ENCODE measurements at regions of chr1 and their contacts with region 1.

Region 1: DNA sequence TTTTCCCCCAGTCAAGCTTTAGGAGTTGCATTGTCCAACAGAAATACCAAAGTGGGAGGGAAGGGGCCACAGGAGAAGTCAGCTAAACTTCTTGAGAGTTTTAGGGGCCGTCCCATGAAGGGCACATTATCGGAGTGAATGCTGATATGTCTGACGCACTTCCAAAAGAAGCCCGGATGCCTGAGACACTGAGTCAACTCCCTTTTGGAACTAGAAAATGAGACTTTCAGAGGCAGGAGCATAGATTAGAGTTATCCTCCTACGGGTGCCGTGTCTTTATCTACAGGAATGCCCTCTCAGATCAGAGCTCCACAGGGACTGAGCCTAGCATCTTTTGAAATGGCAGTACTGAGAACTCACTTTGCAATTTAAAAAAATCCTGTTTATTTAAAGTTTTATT is 13.1 kb downstream of the ACTN2 start:
- DNase-seq: no peak
- H3K4me3 Mint-ChIP-seq: no peak overlapping the region
- H3K27ac Mint-ChIP-seq: no peak overlapping the region
- H3K4me1 Mint-ChIP-seq: no peaks in the 10 kb centered on the region
- H3K27me3 Mint-ChIP-seq: peaks cover 14% of the 10 kb centered on the region

Region 2: GRCh38 chr1:236685917-236686814 is 13.2 kb before region 1 on chr1 and contains the start of gene ACTN2:
- CTCF ChIA-PET with region 1: interaction called, 4 read pairs
- POLR2A ChIA-PET with region 1: interaction called, 15 read pairs
- DNase-seq: peak; percentile 40
- H3K4me3 Mint-ChIP-seq: peak within 1 kb of the TSS; percentile 46
- H3K27ac Mint-ChIP-seq: no peak within 1 kb of the TSS
- H3K4me1 Mint-ChIP-seq: peaks cover 14% of the 10 kb centered on the region
- H3K27me3 Mint-ChIP-seq: peaks cover 46% of the 10 kb centered on the region
- total RNA-seq, gene ACTN2: not detected

Region 3: DNA sequence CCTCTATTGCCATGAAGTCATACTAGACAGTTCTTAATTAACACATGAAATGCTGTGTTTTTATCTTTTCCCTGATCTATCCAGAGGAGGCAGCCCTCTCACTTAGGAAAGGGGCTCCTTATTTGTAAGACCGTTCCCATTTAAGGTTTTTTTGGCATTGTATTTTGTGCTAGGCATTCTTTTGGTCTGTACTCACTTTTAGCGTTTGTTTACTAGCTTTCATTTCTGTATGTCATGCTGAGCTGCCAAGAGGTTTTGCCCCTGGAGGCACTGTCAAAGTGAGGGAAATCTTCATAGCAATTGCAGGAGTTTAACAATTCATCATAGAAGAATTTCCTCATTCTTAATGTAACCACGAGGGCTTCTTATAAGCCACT is 155.2 kb after region 1 on chr1:
- CTCF ChIA-PET with region 1: no interaction called
- POLR2A ChIA-PET with region 1: no interaction called
- DNase-seq: no peak
- H3K4me3 Mint-ChIP-seq: no peak overlapping the region
- H3K27ac Mint-ChIP-seq: no peak overlapping the region
- H3K4me1 Mint-ChIP-seq: no peaks in the 10 kb centered on the region
- H3K27me3 Mint-ChIP-seq: no peaks in the 10 kb centered on the region

Measured in activated CD4-positive, alpha-beta T cell treated with anti-CD3 and anti-CD28 coated beads, Interleukin-2, amount 10 ng/mL, durations not matched to agents 7 days and 5 days (primary cell).